GM12878 (cell line): ENCODE measurements at regions of chr2 and their contacts with region 1.

Region 1: DNA sequence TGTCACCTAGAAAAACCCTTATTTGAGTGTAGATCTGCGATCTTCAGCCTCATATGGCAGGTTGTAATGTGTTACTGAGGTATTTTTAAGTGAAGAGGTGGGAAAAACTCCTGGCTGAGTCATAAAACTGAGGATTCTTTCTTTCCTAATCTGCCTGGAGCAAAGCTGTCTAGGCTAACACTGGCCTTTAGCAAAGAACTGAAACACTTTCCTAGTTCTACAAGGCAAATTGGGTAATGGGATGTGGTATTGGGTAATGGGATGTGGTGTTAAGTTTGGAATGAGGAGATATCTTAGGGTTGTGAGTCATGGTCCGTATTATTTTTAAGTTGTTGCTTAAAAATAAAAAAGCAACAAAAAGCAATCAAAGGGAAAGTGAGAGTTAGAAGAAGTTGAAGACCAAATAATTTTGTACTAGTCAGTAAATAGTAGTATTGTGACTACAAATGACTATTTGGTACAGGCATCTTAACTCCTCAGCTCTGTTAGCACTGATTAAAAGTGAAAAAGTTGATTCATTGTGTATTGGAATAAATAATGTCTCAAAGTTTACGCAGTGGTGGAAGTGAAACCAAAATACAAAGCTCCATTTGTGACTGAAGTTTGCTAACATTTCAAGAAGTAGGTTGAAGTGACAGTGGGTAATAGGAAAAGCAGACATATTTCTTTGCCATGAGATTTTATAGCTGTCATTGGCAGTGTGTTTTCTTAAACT is 216.8 kb downstream of the CAMKMT start:
- DNase-seq: peak; percentile 54
- ATAC-seq: peak; percentile 95
- H3K4me3 ChIP-seq: 0 out of 2 replicates have a peak overlapping the region, but pooled peaks have one; percentile 9
- H3K27ac ChIP-seq: peak overlapping the region; percentile 63
- H3K4me1 ChIP-seq: peaks cover 11% of the 10 kb centered on the region; the same call in 1 of the 2 replicates
- H3K27me3 ChIP-seq: no peaks in the 10 kb centered on the region
- CTCF ChIP-seq: no peak
- EP300 ChIP-seq: peak; percentile 49 to 56; a peak in 1 of 4 replicates
- POLR2A ChIP-seq: no peak
- RAD21 ChIP-seq: no peak

Region 2: GRCh38 chr2:44377486-44377885 is 201.1 kb before region 1 on chr2:
- CTCF ChIA-PET with region 1: no interaction called
- POLR2A ChIA-PET with region 1: no interaction called
- RAD21 ChIA-PET with region 1: no interaction called
- SMC1A ChIA-PET with region 1: no interaction called
- in situ Hi-C with region 1: no loop called
- intact Hi-C with region 1: no loop called
- DNase-seq: no peak
- ATAC-seq: no peak
- H3K4me3 ChIP-seq: no peak overlapping the region
- H3K27ac ChIP-seq: no peak overlapping the region
- H3K4me1 ChIP-seq: no peaks in the 10 kb centered on the region
- H3K27me3 ChIP-seq: no peaks in the 10 kb centered on the region
- CTCF ChIP-seq: no peak
- EP300 ChIP-seq: no peak
- POLR2A ChIP-seq: no peak
- RAD21 ChIP-seq: no peak

Region 3: GRCh38 chr2:44596537-44597320 is 18.2 kb after region 1 on chr2:
- CTCF ChIA-PET with region 1: interaction called, 8 read pairs
- POLR2A ChIA-PET with region 1: interaction called, 7 read pairs
- RAD21 ChIA-PET with region 1: interaction called, 41 read pairs
- SMC1A ChIA-PET with region 1: interaction called, 57 read pairs
- in situ Hi-C with region 1: no loop called
- intact Hi-C with region 1: no loop called
- DNase-seq: peak; percentile 53
- ATAC-seq: peak; percentile 93
- H3K4me3 ChIP-seq: no peak overlapping the region
- H3K27ac ChIP-seq: no peak overlapping the region
- H3K4me1 ChIP-seq: peaks cover 3% of the 10 kb centered on the region; the same call in 1 of the 2 replicates
- H3K27me3 ChIP-seq: no peaks in the 10 kb centered on the region
- CTCF ChIP-seq: no peak
- EP300 ChIP-seq: peak; percentile 68 to 79; a peak in 2 of 4 replicates
- POLR2A ChIP-seq: no peak
- RAD21 ChIP-seq: no peak

Region 4: DNA sequence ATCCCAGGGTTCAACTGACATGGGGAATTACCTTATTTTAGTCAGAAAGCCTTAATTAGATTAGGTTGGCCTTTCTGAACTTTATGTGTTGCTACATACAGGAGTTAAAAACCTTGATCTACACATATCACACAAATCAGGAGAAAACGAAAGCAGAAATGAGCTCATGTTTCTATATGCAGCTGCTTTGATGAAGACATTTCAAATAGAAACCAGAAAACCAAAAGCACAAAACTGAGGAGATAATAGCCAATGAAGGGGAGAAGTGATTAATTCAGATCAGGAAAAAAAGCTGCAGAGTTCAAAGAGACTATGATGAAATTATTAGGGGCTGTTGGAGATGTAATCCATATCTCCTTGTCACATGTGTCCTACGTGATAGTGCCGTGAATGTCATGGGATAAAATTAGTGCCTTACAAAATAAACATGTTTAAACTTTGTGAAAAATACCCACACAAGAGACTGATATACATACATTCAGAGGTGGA is 38.1 kb after region 1 on chr2:
- CTCF ChIA-PET with region 1: interaction called, 12 read pairs
- POLR2A ChIA-PET with region 1: interaction called, 5 read pairs
- RAD21 ChIA-PET with region 1: interaction called, 19 read pairs
- SMC1A ChIA-PET with region 1: interaction called, 41 read pairs
- in situ Hi-C with region 1: no loop called
- intact Hi-C with region 1: no loop called
- DNase-seq: peak; percentile 65
- ATAC-seq: peak; percentile 93
- H3K4me3 ChIP-seq: peak overlapping the region; percentile 42
- H3K27ac ChIP-seq: peak overlapping the region; percentile 71
- H3K4me1 ChIP-seq: peaks cover 26% of the 10 kb centered on the region
- H3K27me3 ChIP-seq: no peaks in the 10 kb centered on the region
- CTCF ChIP-seq: no peak
- EP300 ChIP-seq: peak; percentile 37 to 72; a peak in 2 of 4 replicates
- POLR2A ChIP-seq: no peak
- RAD21 ChIP-seq: no peak

Region 5: GRCh38 chr2:44668336-44668735 is 89.8 kb after region 1 on chr2:
- CTCF ChIA-PET with region 1: interaction called, 23 read pairs
- POLR2A ChIA-PET with region 1: interaction called, 4 read pairs
- RAD21 ChIA-PET with region 1: interaction called, 13 read pairs
- SMC1A ChIA-PET with region 1: interaction called, 11 read pairs
- in situ Hi-C with region 1: no loop called
- intact Hi-C with region 1: no loop called
- DNase-seq: no peak
- ATAC-seq: peak; percentile 73
- H3K4me3 ChIP-seq: no peak overlapping the region
- H3K27ac ChIP-seq: no peak overlapping the region
- H3K4me1 ChIP-seq: no peaks in the 10 kb centered on the region
- H3K27me3 ChIP-seq: no peaks in the 10 kb centered on the region
- CTCF ChIP-seq: peak; percentile 38 to 55 (median 47); a peak in 5 of 6 replicates
- EP300 ChIP-seq: no peak
- POLR2A ChIP-seq: no peak
- RAD21 ChIP-seq: peak; percentile 64

Region 6: DNA sequence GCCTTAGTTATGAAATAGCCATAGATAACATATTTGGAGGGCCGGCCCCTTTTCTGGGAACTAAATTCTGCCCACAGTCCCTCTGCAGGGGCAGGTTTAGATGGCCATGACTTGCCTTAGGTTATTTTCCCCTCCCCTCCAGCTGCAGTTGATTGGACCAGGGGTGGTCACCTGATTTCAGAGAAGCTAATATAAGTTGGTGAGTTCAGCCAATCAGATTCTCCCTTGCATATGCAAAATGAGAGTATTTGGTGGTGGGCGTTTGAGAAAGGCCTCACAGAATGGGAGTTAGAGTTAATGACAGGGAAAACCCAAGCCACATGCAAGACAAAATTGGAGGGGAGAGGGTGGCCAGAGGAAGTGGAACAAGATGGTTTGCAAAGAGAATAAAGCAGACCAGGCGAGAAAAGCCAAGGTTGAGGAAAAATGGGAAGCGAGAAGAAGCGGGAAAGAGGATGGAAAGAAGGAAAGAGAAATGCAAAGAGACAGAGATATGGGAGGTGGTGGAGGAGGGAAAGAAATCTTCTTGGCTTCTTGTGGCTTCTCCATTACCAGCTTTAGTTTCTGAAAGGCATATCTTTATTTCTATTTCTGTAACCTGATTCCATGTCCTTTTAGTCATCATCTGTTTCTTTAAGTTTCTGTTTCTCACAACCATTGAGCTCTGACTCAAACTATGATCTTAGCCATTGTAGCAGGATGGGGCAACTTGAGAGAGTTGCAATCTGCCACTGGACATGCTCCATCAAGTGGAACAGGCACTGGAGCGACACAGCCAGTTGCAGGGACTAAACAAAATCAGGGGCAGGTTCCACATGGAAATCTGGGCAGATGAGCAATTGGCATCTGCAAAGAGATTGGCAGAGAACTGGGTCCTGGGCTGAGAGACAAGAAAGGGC is 254.8 kb after region 1 on chr2:
- CTCF ChIA-PET with region 1: no interaction called
- POLR2A ChIA-PET with region 1: no interaction called
- RAD21 ChIA-PET with region 1: interaction called, 3 read pairs
- SMC1A ChIA-PET with region 1: interaction called, 3 read pairs
- in situ Hi-C with region 1: no loop called
- intact Hi-C with region 1: loop called (anchors 10 kb)
- DNase-seq: peak; percentile 86
- ATAC-seq: peak; percentile 84
- H3K4me3 ChIP-seq: peak overlapping the region; percentile 19; the same call in 1 of the 2 replicates
- H3K27ac ChIP-seq: peak overlapping the region; percentile 62
- H3K4me1 ChIP-seq: peaks cover 43% of the 10 kb centered on the region
- H3K27me3 ChIP-seq: no peaks in the 10 kb centered on the region
- CTCF ChIP-seq: no peak
- EP300 ChIP-seq: peak in 1 of 2 experiments; percentile 63; a peak in 2 of 4 replicates
- POLR2A ChIP-seq: no peak
- RAD21 ChIP-seq: no peak